Breast epithelium (tissue), 4 donors: ENCODE measurements at regions of chr13 and their contacts with region 1.

Region 1: GRCh38 chr13:54078271-54078870 is 1049.8 kb downstream of the OLFM4 start:
- DNase-seq: no peak
- H3K4me3 ChIP-seq: no peak overlapping the region
- H3K27ac ChIP-seq: no peak overlapping the region
- H3K4me1 ChIP-seq: no peaks in the 10 kb centered on the region
- H3K27me3 ChIP-seq: no peaks in the 10 kb centered on the region
- CTCF ChIP-seq: no peak
- POLR2A ChIP-seq: no peak

Region 2: GRCh38 chr13:53782488-53782961 is 295.8 kb before region 1 on chr13:
- intact Hi-C with region 1: loop called (anchors 10 kb)
- DNase-seq: peak in 1 of 2 donors; percentile 17
- H3K4me3 ChIP-seq: peak overlapping the region in 2 of 3 donors; percentile 25 to 49
- H3K27ac ChIP-seq: no peak overlapping the region
- H3K4me1 ChIP-seq: no peaks in the 10 kb centered on the region
- H3K27me3 ChIP-seq: no peaks in the 10 kb centered on the region
- CTCF ChIP-seq: peak; percentile 34 to 64 (median 61)
- POLR2A ChIP-seq: no peak